ENCODE measurements at regions of chr17 and their contacts with region 1.

Region 1: DNA sequence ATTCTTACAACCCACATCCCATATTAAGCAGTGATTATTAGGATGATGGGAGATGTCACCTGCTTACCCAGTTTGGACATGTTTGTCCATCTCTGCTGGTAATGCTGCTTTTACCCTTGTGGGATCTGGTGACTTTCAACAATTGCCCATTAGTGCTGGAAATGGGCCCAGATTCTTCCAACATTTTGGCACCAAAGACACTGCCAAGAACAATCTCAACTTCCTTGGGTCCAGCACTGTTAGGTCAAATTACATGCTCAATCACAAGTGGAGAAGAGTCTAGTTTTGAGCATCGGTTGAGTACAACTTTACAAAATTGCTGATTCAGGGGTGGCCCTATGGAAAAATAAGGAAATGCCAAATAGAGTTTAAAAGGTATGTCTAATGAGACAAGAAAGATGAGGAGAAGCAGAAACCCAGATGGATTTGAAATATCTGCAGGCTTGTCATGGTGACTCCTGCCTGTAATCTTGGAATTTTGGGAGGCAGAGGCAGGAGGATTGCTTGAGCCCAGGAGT is 13.0 kb upstream of the ZFP3 start:
- DNase-seq: no peak
- H3K4me3 ChIP-seq: no peak overlapping the region
- H3K27ac ChIP-seq: no peak overlapping the region
- H3K4me1 ChIP-seq: no peaks in the 10 kb centered on the region
- H3K27me3 ChIP-seq: no peaks in the 10 kb centered on the region
- CTCF ChIP-seq: no peak

Region 2: GRCh38 chr17:4903051-4903818 is 162.1 kb before region 1 on chr17 and contains the start of gene CHRNE:
- CTCF ChIA-PET with region 1: interaction called, 10 read pairs
- POLR2A ChIA-PET with region 1: no interaction called
- intact Hi-C with region 1: loop called (anchors 2 kb)
- DNase-seq: peak; percentile 84
- H3K4me3 ChIP-seq: no peak within 1 kb of the TSS
- H3K27ac ChIP-seq: no peak within 1 kb of the TSS
- H3K4me1 ChIP-seq: peaks cover 13% of the 10 kb centered on the region
- H3K27me3 ChIP-seq: no peaks in the 10 kb centered on the region
- CTCF ChIP-seq: peak; percentile 85
- total RNA-seq, gene CHRNE: 0.21 and 0.79 TPM in 2 replicates

Region 3: DNA sequence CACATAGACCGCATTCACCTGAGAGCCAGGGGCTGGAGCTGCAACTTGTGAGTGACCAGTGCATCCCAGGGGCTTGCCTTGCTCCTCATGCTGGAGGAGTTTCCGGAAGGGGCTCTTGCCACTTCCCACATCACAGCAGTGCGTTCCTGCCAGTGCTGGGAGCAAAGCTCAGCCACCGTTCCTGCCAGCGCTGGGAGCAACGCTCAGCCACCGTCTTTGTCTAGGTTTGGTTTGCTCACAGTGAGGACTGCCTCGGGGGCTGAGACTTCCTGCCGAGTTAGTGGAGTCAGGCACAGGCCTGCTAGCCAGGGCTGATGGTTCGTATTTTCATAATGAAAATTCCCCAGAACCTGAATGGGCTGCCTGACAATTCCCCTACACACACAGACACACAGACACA is 157.0 kb before region 1 on chr17:
- CTCF ChIA-PET with region 1: interaction called, 10 read pairs
- POLR2A ChIA-PET with region 1: no interaction called
- intact Hi-C with region 1: loop called (anchors 2 kb)
- DNase-seq: peak; percentile 47
- H3K4me3 ChIP-seq: no peak overlapping the region
- H3K27ac ChIP-seq: no peak overlapping the region
- H3K4me1 ChIP-seq: peaks cover 4% of the 10 kb centered on the region
- H3K27me3 ChIP-seq: no peaks in the 10 kb centered on the region
- CTCF ChIP-seq: no peak

Region 4: DNA sequence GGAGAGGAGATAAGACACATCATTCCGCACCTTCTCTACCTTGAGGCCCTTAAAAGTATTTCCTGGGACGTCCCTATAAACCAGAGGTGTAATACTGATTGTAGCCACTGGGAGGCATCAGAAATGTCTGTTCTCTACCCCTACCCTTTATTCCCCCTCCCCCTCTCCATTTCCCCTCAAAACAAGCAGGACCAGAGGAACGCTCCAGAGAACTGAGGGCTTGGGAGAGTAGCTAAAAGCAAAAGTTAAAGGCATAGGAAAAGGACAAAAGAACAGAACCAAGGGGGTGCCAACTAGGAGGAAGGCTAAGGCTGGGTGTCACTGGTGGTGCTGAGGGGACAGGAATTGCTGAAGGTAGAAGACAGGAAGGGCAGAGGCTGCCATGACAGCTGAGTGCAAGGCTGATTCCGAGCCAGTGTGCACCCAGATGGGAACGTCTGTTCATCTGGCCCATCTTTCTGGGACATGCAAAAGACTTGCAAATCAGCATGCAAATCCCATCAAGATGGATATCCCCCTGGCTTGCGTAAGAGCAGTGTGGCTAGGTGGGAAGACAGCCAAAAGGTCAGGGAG is 84.6 kb before region 1 on chr17:
- CTCF ChIA-PET with region 1: interaction called, 3 read pairs
- POLR2A ChIA-PET with region 1: no interaction called
- intact Hi-C with region 1: loop called (anchors 1 kb)
- DNase-seq: peak; percentile 82
- H3K4me3 ChIP-seq: no peak overlapping the region
- H3K27ac ChIP-seq: peak overlapping the region; percentile 21
- H3K4me1 ChIP-seq: peaks cover 4% of the 10 kb centered on the region
- H3K27me3 ChIP-seq: no peaks in the 10 kb centered on the region
- CTCF ChIP-seq: peak; percentile 76

Region 5: GRCh38 chr17:5135726-5136579 is 70.7 kb after region 1 on chr17:
- CTCF ChIA-PET with region 1: no interaction called
- POLR2A ChIA-PET with region 1: no interaction called
- intact Hi-C with region 1: no loop called
- DNase-seq: no peak
- H3K4me3 ChIP-seq: no peak overlapping the region
- H3K27ac ChIP-seq: no peak overlapping the region
- H3K4me1 ChIP-seq: no peaks in the 10 kb centered on the region
- H3K27me3 ChIP-seq: no peaks in the 10 kb centered on the region
- CTCF ChIP-seq: no peak